Right lobe of liver (tissue), 6 donors: ENCODE measurements at regions of chr11 and their contacts with region 1.

Region 1: DNA sequence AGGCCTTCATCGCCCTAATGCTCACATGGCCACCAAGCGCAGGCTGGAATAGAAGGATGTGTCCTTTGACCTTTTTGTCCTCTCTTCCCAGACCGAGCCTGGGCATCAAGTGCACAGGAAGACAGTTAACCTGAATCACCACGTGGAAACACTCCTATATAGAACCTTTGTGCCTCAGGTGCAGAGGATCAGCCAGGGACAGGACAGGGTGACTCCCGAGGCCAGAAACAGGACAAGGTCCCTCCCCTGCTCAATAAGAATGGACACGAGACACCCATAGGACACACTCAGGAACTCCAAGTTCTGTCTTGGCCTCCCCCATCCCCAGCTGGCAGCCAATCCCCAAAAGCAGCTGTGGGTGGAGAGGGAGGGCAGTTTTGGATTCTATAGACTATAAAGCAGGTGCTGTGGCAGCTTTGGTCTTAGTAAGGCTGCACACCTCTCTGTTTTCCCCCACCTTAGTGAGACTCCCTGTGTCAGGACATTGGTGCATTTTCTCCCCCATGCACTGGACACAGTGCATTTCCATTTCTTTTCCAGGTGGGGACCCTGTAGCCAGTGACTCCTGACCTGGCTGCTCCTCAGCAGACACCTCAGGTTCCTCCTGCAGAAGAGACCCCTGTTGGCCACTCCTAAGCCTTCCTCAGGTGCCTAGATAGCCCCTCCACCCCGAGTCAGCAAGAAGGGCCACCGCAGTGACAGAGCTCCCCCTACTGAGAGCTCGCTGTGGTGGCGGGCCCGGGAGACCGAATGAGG is 43.6 kb upstream of the POU2AF1 start:
- DNase-seq: peak in 2 of 3 donors; percentile 41 to 58
- ATAC-seq: peak; percentile 75 to 93 (median 82)
- H3K4me3 ChIP-seq: no peak overlapping the region
- H3K27ac ChIP-seq: no peak overlapping the region
- H3K4me1 ChIP-seq: peaks cover 0 to 23% (median 3%) of the 10 kb centered on the region in 4 donors
- H3K27me3 ChIP-seq: no peaks in the 10 kb centered on the region
- CTCF ChIP-seq: peak; percentile 67 to 84 (median 76)
- POLR2A ChIP-seq: no peak

Region 2: GRCh38 chr11:111283945-111284481 is 138.7 kb before region 1 on chr11:
- intact Hi-C with region 1: loop called in 1 of 2 experiments (anchors 5 kb)
- DNase-seq: no peak
- ATAC-seq: peak in 1 of 4 donors; percentile 10
- H3K4me3 ChIP-seq: no peak overlapping the region
- H3K27ac ChIP-seq: no peak overlapping the region
- H3K4me1 ChIP-seq: no peaks in the 10 kb centered on the region
- H3K27me3 ChIP-seq: no peaks in the 10 kb centered on the region
- CTCF ChIP-seq: no peak
- POLR2A ChIP-seq: no peak

Region 3: DNA sequence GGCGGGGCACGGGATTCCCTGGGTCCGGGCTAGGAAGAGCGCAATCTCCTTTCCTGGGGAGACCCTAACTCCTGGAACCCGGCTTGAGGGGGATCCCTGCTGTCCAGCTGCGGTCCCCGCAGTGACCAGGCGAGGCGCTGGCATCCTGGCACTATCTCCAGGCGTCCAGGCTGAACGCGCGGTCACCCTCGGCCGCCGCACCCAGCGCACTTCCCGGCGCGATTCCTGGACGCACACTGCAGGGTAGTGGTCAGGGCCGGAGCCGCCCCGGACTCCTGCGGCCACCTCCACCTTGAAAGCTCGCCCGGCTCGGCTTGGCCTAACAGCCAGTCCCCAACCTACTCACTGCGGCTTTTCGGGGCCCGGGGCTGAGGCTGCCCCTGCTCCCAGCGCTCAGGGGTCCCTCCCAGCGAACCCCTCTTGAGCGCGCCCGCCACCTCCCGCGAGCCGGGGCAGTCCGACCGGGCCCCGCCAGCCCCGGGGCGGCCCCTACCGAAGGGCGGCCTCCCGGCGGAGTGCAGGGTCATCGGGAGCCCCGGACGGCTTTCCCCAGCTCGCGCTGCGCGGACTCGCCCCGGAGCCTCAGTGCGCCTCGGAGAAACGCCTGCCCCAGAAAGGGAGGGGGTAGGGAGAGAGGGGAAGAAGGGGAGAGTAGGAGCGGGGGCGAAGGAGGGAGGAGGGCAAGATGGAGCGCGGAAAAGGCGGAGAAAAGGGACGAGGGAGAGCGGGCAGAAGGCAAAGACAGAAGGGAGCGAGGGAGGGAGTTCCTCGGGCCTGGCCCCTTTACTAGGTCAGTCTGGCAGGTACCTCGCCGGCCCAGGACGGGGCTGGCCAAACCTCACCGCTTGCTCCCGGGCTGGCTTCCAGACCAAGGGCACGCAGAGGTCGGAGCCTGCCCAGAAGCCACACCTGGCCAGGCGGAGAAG is 123.3 kb before region 1 on chr11:
- intact Hi-C with region 1: loop called in 1 of 2 experiments (anchors 5 kb)
- DNase-seq: peak; percentile 81 to 92 (median 91)
- ATAC-seq: peak; percentile 74 to 87 (median 80)
- H3K4me3 ChIP-seq: peak overlapping the region; percentile 54 to 70 (median 64)
- H3K27ac ChIP-seq: peak overlapping the region in 2 of 3 donors; percentile 1 to 49
- H3K4me1 ChIP-seq: peaks cover 0 to 44% (median 21%) of the 10 kb centered on the region in 4 donors
- H3K27me3 ChIP-seq: no peaks in the 10 kb centered on the region
- CTCF ChIP-seq: peak; percentile 60 to 68 (median 62)
- POLR2A ChIP-seq: no peak